Dorsolateral prefrontal cortex (tissue), 120 donors: ENCODE measurements at regions of chr17 and their contacts with region 1.

Region 1: GRCh38 chr17:49677933-49678847 is at the start of gene SPOP:
- DNase-seq: peak; percentile 98 to 100 (median 99)
- H3K4me3 ChIP-seq: peak within 1 kb of the TSS; percentile 48 to 94 (median 75)
- H3K27ac ChIP-seq: peak within 1 kb of the TSS; percentile 84 to 100 (median 98)
- H3K27me3 ChIP-seq: no peaks in the 10 kb centered on the region
- CTCF ChIP-seq: peak in 12 of 56 donors; percentile 6 to 34 (median 19)
- total RNA-seq, gene SPOP: 75.2 to 140 (median 105) TPM

Region 2: DNA sequence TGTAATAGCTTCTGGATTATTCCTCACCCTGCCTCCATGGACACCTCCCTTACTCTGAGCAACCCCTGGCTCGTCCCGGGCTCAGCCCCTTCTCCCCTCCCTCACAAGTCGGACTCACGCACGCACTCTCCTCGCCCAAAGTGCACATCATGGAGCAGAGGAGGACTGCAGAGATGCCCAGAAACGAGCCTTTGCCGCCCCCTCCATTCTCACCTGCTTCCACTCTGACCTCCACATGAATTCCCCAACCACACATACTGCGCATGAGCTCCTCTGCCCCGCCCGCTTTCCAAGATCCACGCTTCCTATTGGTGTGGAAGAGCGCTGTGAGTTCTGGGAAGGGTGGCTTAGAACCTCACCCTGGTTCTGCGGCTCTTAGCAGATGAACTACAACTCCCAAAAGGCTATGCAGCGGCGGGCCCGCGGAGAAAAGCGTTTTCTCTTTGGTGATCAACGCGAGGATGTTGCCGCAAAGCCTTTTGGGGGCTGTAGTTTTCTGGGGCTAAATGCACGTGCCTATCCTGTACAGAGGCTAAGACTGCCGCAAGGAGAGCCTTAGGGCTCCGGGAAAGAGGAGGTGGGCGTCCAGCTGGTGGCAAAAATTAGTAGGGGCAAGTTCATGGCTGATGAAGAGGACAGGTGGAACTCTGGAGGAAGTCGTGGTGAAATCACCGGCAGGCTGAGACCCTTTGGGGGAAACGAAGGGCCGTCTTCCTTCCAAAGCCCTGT is 263.4 kb before region 1 on chr17 and contains the start of gene PHB1:
- intact Hi-C with region 1: loop called in 1 of 2 experiments (anchors 2 kb)
- DNase-seq: peak; percentile 92 to 99 (median 97)
- H3K4me3 ChIP-seq: peak within 1 kb of the TSS; percentile 70 to 100 (median 92)
- H3K27ac ChIP-seq: peak within 1 kb of the TSS in 16 of 59 donors; percentile 12 to 78 (median 40)
- H3K27me3 ChIP-seq: no peaks in the 10 kb centered on the region
- CTCF ChIP-seq: peak in 36 of 56 donors; percentile 5 to 60 (median 34)
- total RNA-seq, gene PHB1: 64.2 to 118 (median 89.1) TPM

Region 3: DNA sequence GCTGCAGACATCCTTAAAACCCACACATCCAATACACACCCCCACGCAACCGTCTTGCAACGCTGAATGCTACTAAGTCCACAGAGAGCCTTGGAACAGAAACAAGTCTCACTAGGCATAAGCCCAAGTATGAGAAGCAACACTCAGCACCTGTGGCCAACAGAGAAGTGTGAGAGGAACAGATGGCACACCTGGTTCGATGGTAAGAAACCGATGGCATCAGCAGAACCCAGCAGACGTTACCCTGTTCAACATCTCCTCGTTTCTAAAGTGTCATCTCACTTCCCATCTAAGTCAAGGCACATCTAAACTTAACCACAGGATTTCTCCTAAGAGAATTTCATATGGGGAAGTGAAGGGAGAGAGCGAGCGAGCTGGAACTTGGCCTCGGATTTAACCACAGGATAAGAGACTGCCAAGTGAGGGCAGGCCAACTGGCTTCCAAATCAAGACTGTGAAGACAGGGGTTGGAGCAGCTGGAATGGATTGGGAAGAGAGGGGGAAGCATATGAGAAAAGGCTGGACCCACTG is 61.5 kb before region 1 on chr17:
- intact Hi-C with region 1: loop called in 1 of 2 experiments (anchors 10 kb)
- DNase-seq: peak in 9 of 10 donors; percentile 24 to 77 (median 53)
- H3K4me3 ChIP-seq: peak overlapping the region in 1 of 59 donors; percentile 10
- H3K27ac ChIP-seq: peak overlapping the region in 35 of 59 donors; percentile 3 to 67 (median 38)
- H3K27me3 ChIP-seq: no peaks in the 10 kb centered on the region
- CTCF ChIP-seq: no peak

Region 4: GRCh38 chr17:49694847-49695683 is 16.9 kb after region 1 on chr17:
- intact Hi-C with region 1: no loop called
- DNase-seq: peak in 7 of 10 donors; percentile 52 to 73 (median 59)
- H3K4me3 ChIP-seq: peak overlapping the region in 43 of 59 donors; percentile 1 to 56 (median 28)
- H3K27ac ChIP-seq: peak overlapping the region in 6 of 59 donors; percentile 1 to 74 (median 32)
- H3K27me3 ChIP-seq: no peaks in the 10 kb centered on the region
- CTCF ChIP-seq: peak; percentile 76 to 98 (median 93)